Activated CD8-positive, alpha-beta memory T cell treated with anti-CD3 and anti-CD28 coated beads, Interleukin-2, amount 10 ng/mL, durations not matched to agents 7 days and 5 days (primary cell): ENCODE measurements at regions of chr17 and their contacts with region 1.

Region 1: GRCh38 chr17:35119368-35120165 is at the start of gene RAD51D:
- DNase-seq: peak; percentile 85
- ATAC-seq: peak; percentile 93
- H3K4me3 Mint-ChIP-seq: peak within 1 kb of the TSS; percentile 79
- H3K27ac Mint-ChIP-seq: peak within 1 kb of the TSS; percentile 89
- H3K4me1 Mint-ChIP-seq: peaks cover 42% of the 10 kb centered on the region
- H3K27me3 Mint-ChIP-seq: no peaks in the 10 kb centered on the region
- total RNA-seq, gene RAD51D: 34.0 to 43.0 TPM

Region 2: DNA sequence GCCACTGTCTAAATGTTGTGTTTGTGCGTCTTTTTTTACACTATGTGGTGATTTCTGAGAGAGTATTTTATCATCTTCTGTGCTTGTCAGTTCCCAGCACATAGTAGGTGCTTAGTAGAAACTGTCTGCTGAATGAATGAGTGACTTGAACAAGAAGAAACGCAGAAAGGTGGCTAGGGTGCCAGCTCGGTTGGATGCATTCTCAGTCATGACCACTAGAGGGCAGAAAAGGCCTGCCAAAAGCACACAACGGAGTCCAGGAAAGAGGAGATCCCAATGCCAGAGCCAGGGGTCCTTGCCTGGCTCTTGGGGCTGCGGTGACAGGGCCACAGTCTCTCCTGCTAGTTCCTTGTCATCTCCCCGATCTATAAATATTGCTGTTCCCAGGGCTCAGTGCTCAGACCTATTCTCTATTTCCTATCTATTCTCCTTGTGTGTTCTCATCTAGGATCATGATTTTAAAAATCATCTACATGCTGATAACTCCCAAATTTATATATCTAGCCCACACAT is 699.3 kb before region 1 on chr17:
- CTCF ChIA-PET with region 1: interaction called, 17 read pairs
- DNase-seq: peak; percentile 75
- ATAC-seq: peak; percentile 45
- H3K4me3 Mint-ChIP-seq: no peak overlapping the region
- H3K27ac Mint-ChIP-seq: no peak overlapping the region
- H3K4me1 Mint-ChIP-seq: no peaks in the 10 kb centered on the region
- H3K27me3 Mint-ChIP-seq: peaks cover 60% of the 10 kb centered on the region

Region 3: GRCh38 chr17:34637548-34638525 is 481.7 kb before region 1 on chr17:
- CTCF ChIA-PET with region 1: interaction called, 11 read pairs
- DNase-seq: peak; percentile 85
- ATAC-seq: peak; percentile 95
- H3K4me3 Mint-ChIP-seq: peak overlapping the region; percentile 3
- H3K27ac Mint-ChIP-seq: no peak overlapping the region
- H3K4me1 Mint-ChIP-seq: peaks cover 5% of the 10 kb centered on the region
- H3K27me3 Mint-ChIP-seq: peaks cover 58% of the 10 kb centered on the region

Region 4: DNA sequence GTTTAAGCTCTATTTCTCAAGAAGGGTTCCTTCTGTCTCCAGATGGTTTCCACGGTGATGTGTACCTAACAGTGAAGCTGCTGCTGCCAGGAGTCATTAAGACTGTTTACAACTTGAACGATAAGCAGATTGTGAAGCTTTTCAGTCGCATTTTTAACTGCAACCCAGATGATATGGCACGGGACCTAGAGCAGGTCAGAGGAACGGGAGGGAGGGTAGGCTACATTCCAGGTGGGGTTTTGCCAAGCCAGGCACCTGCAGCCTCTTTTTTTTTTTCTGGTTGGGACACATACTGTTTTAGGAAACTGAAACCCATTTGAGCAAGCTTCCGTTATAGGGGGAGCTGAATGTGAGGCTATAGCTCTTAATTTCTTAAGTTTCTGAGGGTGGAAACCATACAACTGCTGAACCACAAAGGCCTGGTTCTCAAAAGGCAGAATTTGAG is 128.6 kb before region 1 on chr17:
- CTCF ChIA-PET with region 1: interaction called, 109 read pairs
- DNase-seq: peak; percentile 56
- ATAC-seq: peak; percentile 74
- H3K4me3 Mint-ChIP-seq: peak overlapping the region; percentile 23
- H3K27ac Mint-ChIP-seq: peak overlapping the region; percentile 97
- H3K4me1 Mint-ChIP-seq: peaks cover 63% of the 10 kb centered on the region
- H3K27me3 Mint-ChIP-seq: no peaks in the 10 kb centered on the region

Region 5: DNA sequence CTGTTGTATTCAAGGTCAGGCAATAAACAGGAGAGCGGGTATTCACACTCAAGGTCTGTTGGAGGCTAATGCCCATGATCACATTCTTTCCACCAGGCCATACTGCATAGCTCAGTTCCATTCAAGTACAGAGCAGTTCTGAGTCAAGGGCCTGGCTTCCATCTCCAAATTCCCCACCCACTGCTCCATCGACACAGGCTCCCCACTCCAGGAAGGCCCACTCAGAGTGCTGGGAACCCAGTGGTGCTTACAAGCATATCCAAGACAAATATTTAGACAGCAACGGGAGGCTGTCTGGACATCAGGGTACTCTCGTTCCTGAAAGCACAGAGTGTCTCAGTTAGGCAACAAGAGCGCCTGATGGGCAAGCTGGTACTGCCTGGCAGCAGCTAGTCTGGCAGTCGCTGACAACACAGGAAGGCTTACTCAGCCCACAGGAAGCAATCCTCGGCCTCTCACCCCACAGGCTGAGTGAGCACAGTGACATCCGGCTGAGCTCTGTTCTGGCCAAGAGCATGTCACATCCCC is 97.0 kb before region 1 on chr17:
- CTCF ChIA-PET with region 1: interaction called, 15 read pairs
- DNase-seq: peak; percentile 93
- ATAC-seq: peak; percentile 100
- H3K4me3 Mint-ChIP-seq: peak overlapping the region; percentile 60
- H3K27ac Mint-ChIP-seq: peak overlapping the region; percentile 98
- H3K4me1 Mint-ChIP-seq: peaks cover 56% of the 10 kb centered on the region
- H3K27me3 Mint-ChIP-seq: no peaks in the 10 kb centered on the region

Region 6: DNA sequence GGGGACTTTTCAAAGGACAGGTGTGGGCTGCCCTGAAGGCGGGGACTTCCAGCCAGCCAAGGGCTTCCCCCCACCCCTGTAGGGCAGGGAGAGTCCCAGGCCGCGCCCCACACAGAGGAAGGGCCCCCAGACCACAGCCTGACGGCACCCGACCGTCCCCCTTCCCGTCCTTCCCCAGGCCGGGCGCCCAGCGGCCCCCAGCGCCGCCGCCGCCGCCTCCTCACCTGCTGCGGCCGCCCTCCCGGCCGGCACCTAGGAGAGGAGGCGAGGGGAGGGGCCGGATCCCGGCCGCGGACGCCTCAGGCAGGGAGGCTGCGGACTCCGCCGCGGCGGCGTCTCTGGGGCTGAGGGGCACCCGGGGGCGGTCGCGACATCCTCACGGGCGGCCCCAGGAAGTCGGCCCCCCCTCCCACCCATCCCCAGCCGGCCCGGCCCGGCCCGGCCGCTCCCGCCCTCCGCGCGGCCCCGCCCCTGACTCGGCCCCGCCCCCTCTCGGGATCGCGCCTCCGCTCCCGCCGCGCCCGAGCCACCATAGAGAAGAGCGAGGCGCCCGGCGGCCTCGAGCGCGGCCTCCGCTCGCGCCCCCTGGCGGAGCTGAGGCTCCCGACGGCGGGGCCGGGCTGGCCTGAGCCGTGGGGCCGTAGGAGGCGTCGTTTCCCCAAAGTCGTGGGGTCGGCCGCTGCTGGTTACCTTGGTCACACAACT is 30.5 kb before region 1 on chr17:
- CTCF ChIA-PET with region 1: interaction called, 59 read pairs
- DNase-seq: peak; percentile 93
- ATAC-seq: peak; percentile 84
- H3K4me3 Mint-ChIP-seq: peak overlapping the region; percentile 92
- H3K27ac Mint-ChIP-seq: peak overlapping the region; percentile 96
- H3K4me1 Mint-ChIP-seq: peaks cover 52% of the 10 kb centered on the region
- H3K27me3 Mint-ChIP-seq: no peaks in the 10 kb centered on the region